ENCODE measurements at regions of chr4 and their contacts with region 1.

Region 1: GRCh38 chr4:42440083-42440482 is 42.8 kb downstream of the SHISA3 start:
- DNase-seq: no peak
- ATAC-seq: no peak
- H3K4me3 ChIP-seq: no peak overlapping the region
- H3K27ac ChIP-seq: no peak overlapping the region
- H3K4me1 ChIP-seq: no peaks in the 10 kb centered on the region
- H3K27me3 ChIP-seq: no peaks in the 10 kb centered on the region; the same call in 1 of the 2 replicates
- CTCF ChIP-seq: no peak

Region 2: DNA sequence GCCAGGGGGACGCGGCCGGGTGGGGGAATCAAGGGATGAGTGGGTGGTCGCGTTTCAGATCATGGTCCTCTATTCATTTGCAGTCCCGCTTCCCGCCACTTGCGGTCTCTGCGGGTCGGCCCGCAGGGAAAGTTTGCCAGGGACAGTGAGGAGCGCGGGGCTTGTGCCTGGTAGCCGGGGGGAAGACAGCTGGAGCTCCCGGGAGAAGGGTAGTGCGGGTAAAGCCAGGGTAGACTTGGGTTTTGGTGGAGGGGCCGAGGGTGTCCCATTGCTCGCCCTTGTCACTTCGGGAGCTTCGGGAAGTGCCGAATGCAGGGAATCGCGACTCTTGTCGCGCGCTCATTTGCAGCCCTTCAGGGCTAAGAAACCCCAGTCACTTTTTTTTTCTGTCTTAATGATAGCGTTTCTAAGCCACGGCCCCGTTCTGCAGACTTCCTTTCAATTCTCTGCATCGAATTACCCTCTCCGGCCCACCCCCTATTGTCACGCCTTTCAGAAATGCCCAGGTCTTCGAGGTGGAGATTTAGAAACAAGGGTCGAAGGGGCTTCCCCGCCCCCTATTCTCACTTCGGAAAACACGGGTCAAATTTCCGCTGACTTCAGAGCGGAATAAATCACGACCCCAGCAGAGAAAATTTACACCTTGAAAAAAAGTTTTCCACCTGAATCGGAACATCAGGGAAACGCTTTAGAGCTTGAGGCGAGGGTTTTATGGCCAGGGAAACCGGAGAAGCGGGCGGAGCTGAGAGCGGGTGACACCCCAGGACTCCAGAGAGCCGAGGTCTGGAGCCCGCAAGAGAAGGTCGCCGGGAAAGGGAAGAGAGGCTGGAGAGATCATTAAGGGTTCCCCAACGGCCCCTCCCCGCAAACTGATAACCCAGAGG is 41.4 kb before region 1 on chr4:
- CTCF ChIA-PET with region 1: interaction called, 11 read pairs
- POLR2A ChIA-PET with region 1: no interaction called
- in situ Hi-C with region 1: no loop called
- intact Hi-C with region 1: no loop called
- DNase-seq: no peak
- ATAC-seq: peak; percentile 8; the same call in 1 of the 2 replicates
- H3K4me3 ChIP-seq: peak overlapping the region; percentile 32 to 39; a peak in 2 of 4 replicates
- H3K27ac ChIP-seq: no peak overlapping the region
- H3K4me1 ChIP-seq: no peaks in the 10 kb centered on the region; the same call in 1 of the 2 replicates
- H3K27me3 ChIP-seq: peaks cover 5% of the 10 kb centered on the region
- CTCF ChIP-seq: no peak

Measured in Panc1 (cell line).